Activated CD4-positive, alpha-beta memory T cell treated with anti-CD3 and anti-CD28 coated beads, Interleukin-2, amount 10 ng/mL, durations not matched to agents 7 days and 5 days (primary cell): ENCODE measurements at regions of chr1 and their contacts with region 1.

Region 1: GRCh38 chr1:42936309-42937078 is 22.2 kb downstream of the SLC2A1 start:
- DNase-seq: peak; percentile 59
- H3K4me3 Mint-ChIP-seq: peak overlapping the region; percentile 52
- H3K27ac Mint-ChIP-seq: peak overlapping the region; percentile 94
- H3K4me1 Mint-ChIP-seq: peaks cover 99% of the 10 kb centered on the region
- H3K27me3 Mint-ChIP-seq: no peaks in the 10 kb centered on the region

Region 2: DNA sequence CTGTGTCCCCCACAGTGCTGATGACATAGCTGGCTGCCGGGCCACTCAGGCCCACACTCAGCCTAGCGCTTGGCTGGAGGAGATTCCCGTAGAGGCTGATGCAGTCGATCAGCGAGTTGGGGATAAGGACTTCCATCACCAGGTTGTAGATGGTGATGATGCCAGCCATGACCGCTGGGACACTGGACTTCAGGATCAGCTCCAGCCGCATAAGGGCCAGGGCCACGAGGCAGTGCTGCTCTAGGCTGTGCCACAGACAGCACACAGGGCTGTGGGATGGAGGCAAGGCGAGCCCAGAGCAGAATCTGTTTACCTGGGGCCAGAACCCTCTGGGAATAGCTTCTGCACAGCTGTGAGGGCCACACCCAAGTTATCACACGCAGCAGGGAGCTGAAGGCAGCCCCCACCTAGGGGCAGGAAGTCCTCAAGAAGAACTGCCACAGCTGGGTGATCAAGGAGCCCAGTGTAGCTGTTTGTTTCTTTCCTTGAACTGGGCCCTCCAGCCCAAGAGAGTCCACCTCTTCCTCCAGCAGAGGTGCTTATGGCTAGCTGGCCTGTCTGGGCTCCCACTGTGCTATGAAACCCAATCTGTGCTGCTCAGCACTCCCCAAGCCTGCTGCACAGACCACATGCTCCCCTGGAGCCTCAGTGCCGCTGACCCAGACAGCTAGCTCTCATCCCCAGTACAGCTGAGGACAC is 16.0 kb after region 1 on chr1:
- CTCF ChIA-PET with region 1: interaction called, 12 read pairs
- POLR2A ChIA-PET with region 1: interaction called, 387 read pairs
- DNase-seq: peak; percentile 57
- H3K4me3 Mint-ChIP-seq: peak overlapping the region; percentile 40
- H3K27ac Mint-ChIP-seq: peak overlapping the region; percentile 87
- H3K4me1 Mint-ChIP-seq: peaks cover 86% of the 10 kb centered on the region
- H3K27me3 Mint-ChIP-seq: no peaks in the 10 kb centered on the region